Esophagus muscularis mucosa (tissue), 4 donors: ENCODE measurements at regions of chr5 and their contacts with region 1.

Region 1: GRCh38 chr5:134289509-134290113 is 63.7 kb upstream of the PPP2CA start:
- DNase-seq: no peak
- H3K4me3 ChIP-seq: no peak overlapping the region
- H3K27ac ChIP-seq: no peak overlapping the region
- H3K4me1 ChIP-seq: no peaks in the 10 kb centered on the region
- H3K27me3 ChIP-seq: no peaks in the 10 kb centered on the region
- CTCF ChIP-seq: peak; percentile 64 to 74 (median 71)
- EP300 ChIP-seq: no peak
- POLR2A ChIP-seq: no peak

Region 2: DNA sequence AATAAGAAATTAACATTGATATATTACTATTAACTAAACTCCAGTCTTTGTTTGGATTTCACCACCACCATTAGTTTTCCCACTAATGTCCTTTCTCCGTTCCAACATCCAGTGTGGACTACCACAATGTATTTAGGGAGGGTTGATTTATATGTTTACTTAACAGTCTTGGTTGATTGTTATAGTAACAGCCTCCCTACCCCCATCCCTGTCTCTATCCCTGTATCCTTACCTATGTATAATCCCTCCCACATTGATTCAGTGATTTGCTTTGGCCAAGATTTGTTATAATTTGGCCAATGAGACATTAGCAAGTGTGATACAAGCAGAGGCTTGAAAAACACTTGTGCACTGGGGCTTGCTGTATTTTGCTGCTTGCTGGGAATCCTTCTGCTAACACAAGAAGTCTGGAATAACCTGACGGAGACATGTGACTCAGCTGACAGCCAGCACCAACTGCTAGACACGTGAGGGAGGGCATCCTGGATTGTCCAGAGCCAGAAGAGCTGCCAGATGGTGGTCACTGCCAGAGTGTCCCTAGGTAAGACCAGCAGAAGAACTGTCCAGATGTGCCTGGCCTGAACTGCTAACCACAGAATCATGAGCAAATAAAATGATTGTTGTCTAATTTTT is 226.3 kb before region 1 on chr5:
- intact Hi-C with region 1: no loop called
- DNase-seq: no peak
- H3K4me3 ChIP-seq: no peak overlapping the region
- H3K27ac ChIP-seq: no peak overlapping the region
- H3K4me1 ChIP-seq: no peaks in the 10 kb centered on the region
- H3K27me3 ChIP-seq: no peaks in the 10 kb centered on the region
- CTCF ChIP-seq: no peak
- EP300 ChIP-seq: no peak
- POLR2A ChIP-seq: no peak

Region 3: GRCh38 chr5:134101686-134102439 is 187.7 kb before region 1 on chr5:
- intact Hi-C with region 1: loop called (anchors 2 kb)
- DNase-seq: no peak
- H3K4me3 ChIP-seq: no peak overlapping the region
- H3K27ac ChIP-seq: no peak overlapping the region
- H3K4me1 ChIP-seq: peaks cover 0 to 17% (median 13%) of the 10 kb centered on the region in 4 donors
- H3K27me3 ChIP-seq: no peaks in the 10 kb centered on the region
- CTCF ChIP-seq: peak; percentile 69 to 96 (median 80)
- EP300 ChIP-seq: no peak
- POLR2A ChIP-seq: no peak

Region 4: GRCh38 chr5:134184155-134185135 is 105.2 kb before region 1 on chr5:
- intact Hi-C with region 1: loop called (anchors 1 kb)
- DNase-seq: no peak
- H3K4me3 ChIP-seq: no peak overlapping the region
- H3K27ac ChIP-seq: no peak overlapping the region
- H3K4me1 ChIP-seq: peaks cover 0 to 8% (median 2%) of the 10 kb centered on the region in 4 donors
- H3K27me3 ChIP-seq: no peaks in the 10 kb centered on the region
- CTCF ChIP-seq: peak; percentile 81 to 97 (median 90)
- EP300 ChIP-seq: no peak
- POLR2A ChIP-seq: no peak

Region 5: DNA sequence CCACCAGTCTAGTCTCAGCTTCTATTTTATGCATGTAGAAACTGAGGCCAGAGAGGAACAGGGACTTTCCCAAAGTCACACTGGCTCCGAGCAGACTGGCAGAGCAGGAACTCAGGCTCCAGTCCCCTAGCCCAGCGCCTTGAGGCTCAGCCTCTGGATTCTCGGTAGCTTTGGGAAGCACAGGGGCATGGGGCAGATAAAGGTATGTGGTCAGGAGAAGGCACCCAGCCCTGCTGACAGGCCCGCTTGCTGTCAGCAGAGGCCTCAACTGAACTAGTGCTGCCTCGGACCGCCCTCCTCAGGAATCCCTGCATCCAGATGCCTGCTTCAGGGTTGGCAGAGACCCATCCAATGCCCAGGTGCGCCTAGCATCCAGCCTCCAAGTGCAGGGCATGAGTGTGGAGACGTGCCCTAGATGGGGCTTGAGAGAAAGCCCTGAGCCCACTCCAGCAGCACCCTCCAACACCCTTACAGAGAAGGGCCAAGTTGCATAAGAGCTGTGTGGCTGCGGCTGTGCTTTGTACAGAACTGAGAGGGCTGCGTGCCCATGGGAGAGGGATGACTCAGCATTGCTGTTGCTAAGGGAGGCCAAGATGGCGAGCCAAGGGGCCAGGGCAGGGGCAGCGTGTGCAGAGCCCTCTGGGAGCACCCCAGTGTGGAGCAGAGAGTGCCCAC is 940.8 kb after region 1 on chr5:
- intact Hi-C with region 1: no loop called
- DNase-seq: no peak
- H3K4me3 ChIP-seq: no peak overlapping the region
- H3K27ac ChIP-seq: peak overlapping the region in 1 of 4 donors; percentile 8
- H3K4me1 ChIP-seq: peaks cover 16 to 41% (median 32%) of the 10 kb centered on the region in 4 donors
- H3K27me3 ChIP-seq: no peaks in the 10 kb centered on the region
- CTCF ChIP-seq: no peak
- EP300 ChIP-seq: no peak
- POLR2A ChIP-seq: no peak